ENCODE measurements at regions of chr12 and their contacts with region 1.

Region 1: DNA sequence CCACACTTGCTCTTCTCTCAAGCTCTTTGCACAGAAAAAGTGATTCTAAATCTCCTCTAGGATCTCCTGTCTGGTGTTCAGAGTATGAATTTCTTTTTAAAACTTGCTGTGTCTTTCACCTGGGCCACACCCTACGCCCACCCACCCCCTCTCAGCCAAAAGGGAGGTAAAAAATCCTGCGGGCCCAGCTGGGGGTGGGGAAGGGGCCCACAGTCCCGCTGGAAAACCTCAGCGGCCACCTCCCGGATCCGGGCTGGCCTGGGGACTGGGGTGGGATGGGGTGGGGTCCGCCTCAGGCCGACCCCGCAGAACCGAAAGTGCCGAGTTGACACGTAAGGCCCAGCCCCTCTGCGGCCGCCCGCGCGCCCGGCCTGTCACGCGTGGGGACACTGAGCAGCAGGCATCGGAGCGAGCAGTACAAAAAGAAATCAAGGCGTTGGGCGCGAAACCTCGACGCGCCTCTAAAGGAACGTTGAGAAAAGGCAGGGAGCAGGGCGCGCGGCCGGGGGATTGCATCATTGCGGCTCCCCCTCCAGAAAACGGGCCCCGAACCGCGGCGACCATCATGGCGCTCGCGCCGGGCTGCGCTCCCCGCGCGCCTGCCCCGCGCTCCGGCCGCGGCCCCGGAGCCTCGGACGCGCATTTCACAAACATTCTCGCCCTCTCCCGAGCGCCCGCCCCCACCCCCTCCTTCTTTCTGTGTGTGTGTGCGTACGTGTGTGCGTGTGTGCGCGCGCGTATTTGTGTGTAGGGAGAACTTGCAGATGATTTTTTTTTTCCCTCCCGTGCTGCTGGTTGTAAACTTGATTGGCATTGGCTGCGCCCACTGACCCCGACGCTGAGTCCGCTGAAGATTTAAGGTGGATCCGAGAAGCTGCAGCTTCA is 7.7 kb downstream of the CDKN1B start:
- DNase-seq: peak; percentile 98
- H3K4me3 ChIP-seq: peak overlapping the region; percentile 96
- H3K27ac ChIP-seq: peak overlapping the region; percentile 99
- H3K4me1 ChIP-seq: peaks cover 23% of the 10 kb centered on the region
- H3K27me3 ChIP-seq: no peaks in the 10 kb centered on the region
- CTCF ChIP-seq: no peak

Region 2: DNA sequence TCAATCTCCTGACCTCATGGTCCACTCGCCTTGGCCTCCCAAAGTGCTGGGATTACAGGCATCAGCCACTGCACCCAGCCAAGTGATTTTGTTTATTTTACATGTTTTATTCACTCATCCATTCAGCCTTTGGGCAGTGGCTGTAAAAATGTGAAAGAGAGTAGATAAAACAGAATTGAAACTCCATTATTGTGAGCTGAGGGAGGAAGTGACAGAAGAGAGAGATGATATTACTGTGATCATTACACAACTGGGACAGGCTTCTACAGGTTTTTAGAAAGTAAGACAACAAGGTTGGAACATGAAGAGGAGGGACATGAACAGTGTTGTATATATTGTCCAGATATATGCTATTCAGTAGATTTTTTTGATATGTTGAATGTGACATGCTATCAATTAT is 88.3 kb before region 1 on chr12:
- CTCF ChIA-PET with region 1: no interaction called
- POLR2A ChIA-PET with region 1: no interaction called
- intact Hi-C with region 1: no loop called
- DNase-seq: no peak
- H3K4me3 ChIP-seq: no peak overlapping the region
- H3K27ac ChIP-seq: no peak overlapping the region
- H3K4me1 ChIP-seq: no peaks in the 10 kb centered on the region
- H3K27me3 ChIP-seq: no peaks in the 10 kb centered on the region
- CTCF ChIP-seq: no peak

Region 3: GRCh38 chr12:12661086-12661485 is 63.8 kb before region 1 on chr12:
- CTCF ChIA-PET with region 1: interaction called, 14 read pairs
- POLR2A ChIA-PET with region 1: no interaction called
- intact Hi-C with region 1: no loop called
- DNase-seq: no peak
- H3K4me3 ChIP-seq: no peak overlapping the region
- H3K27ac ChIP-seq: no peak overlapping the region
- H3K4me1 ChIP-seq: no peaks in the 10 kb centered on the region
- H3K27me3 ChIP-seq: no peaks in the 10 kb centered on the region
- CTCF ChIP-seq: no peak

Region 4: GRCh38 chr12:12704593-12705230 is 20.2 kb before region 1 on chr12:
- CTCF ChIA-PET with region 1: no interaction called
- POLR2A ChIA-PET with region 1: no interaction called
- intact Hi-C with region 1: no loop called
- DNase-seq: peak; percentile 92
- H3K4me3 ChIP-seq: no peak overlapping the region
- H3K27ac ChIP-seq: no peak overlapping the region
- H3K4me1 ChIP-seq: peaks cover 12% of the 10 kb centered on the region
- H3K27me3 ChIP-seq: no peaks in the 10 kb centered on the region
- CTCF ChIP-seq: peak; percentile 89